Activated CD4-positive, alpha-beta memory T cell treated with anti-CD3 and anti-CD28 coated beads, Interleukin-2, amount 10 ng/mL, durations not matched to agents 7 days and 5 days (primary cell): ENCODE measurements at regions of chr12 and their contacts with region 1.

Region 1: GRCh38 chr12:3727877-3728632 is 24.9 kb downstream of the CRACR2A start:
- DNase-seq: peak; percentile 65
- H3K4me3 Mint-ChIP-seq: peak overlapping the region; percentile 37
- H3K27ac Mint-ChIP-seq: peak overlapping the region; percentile 84
- H3K4me1 Mint-ChIP-seq: peaks cover 39% of the 10 kb centered on the region
- H3K27me3 Mint-ChIP-seq: no peaks in the 10 kb centered on the region

Region 2: DNA sequence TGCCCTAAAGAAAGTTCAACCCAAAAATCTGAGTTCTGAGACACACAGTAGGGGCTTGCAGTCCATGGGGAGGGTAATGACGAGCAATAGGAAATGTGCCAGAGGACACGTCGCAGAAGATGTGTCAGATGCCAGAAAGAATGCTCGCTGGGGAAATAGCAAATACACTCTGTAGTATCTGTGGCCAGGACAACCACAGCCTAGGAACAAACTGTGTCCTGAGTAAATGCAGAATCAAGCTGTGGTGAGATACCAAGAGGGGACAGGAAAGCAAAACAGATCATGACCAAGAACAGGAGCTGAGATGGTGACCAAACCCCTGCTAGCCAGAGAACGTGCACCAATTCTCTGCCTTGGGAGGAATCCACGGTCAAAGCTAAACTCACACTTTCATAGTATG is 15.7 kb after region 1 on chr12:
- CTCF ChIA-PET with region 1: interaction called, 3 read pairs
- POLR2A ChIA-PET with region 1: interaction called, 19 read pairs
- DNase-seq: peak; percentile 66
- H3K4me3 Mint-ChIP-seq: no peak overlapping the region
- H3K27ac Mint-ChIP-seq: peak overlapping the region; percentile 70
- H3K4me1 Mint-ChIP-seq: peaks cover 53% of the 10 kb centered on the region
- H3K27me3 Mint-ChIP-seq: no peaks in the 10 kb centered on the region

Region 3: DNA sequence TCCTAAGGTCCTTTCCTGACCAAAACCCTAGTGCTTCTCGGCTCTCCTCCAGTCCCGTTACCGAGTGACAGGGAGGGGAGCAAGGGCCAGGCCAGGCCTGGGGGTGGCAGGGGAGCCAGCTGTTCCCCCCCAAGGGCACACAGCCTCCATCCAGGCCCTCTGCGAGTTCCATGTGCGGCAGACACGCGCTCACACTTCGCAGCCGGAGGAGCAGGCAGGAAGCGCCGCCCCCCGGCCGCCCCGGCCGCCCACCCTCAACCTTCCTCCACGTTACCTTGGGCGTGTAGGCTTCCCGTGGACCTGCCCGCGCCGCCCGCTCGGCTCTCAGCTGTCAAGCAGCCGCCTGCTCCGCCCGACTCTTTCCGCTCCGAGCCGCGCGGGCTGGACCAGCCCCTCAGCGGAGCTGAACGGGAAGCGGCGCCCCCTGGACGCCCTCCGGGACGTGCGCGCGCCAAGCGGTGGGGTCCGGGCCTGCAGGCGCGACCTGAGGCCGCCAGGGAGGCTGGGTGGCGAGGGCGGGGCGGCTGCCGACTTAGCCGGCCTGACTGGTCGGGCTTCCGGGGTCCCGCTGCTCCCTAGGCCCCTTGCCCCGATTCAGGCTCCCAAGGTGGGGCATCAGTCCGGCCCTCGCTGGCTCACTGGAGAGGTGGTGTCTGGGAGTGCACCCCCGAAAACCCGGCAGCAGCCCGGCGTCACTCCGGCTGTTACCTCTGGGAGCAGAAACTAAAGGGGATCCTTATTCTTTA is 24.9 kb after region 1 on chr12 and contains the start of gene CRACR2A:
- CTCF ChIA-PET with region 1: interaction called, 3 read pairs
- POLR2A ChIA-PET with region 1: interaction called, 14 read pairs
- DNase-seq: peak; percentile 88
- H3K4me3 Mint-ChIP-seq: peak within 1 kb of the TSS; percentile 89
- H3K27ac Mint-ChIP-seq: peak within 1 kb of the TSS; percentile 97
- H3K4me1 Mint-ChIP-seq: peaks cover 57% of the 10 kb centered on the region
- H3K27me3 Mint-ChIP-seq: no peaks in the 10 kb centered on the region
- total RNA-seq, gene CRACR2A: 32.4 to 34.3 TPM

Region 4: GRCh38 chr12:4011597-4011996 is 283.5 kb after region 1 on chr12:
- CTCF ChIA-PET with region 1: no interaction called
- POLR2A ChIA-PET with region 1: no interaction called
- DNase-seq: no peak
- H3K4me3 Mint-ChIP-seq: no peak overlapping the region
- H3K27ac Mint-ChIP-seq: no peak overlapping the region
- H3K4me1 Mint-ChIP-seq: no peaks in the 10 kb centered on the region
- H3K27me3 Mint-ChIP-seq: no peaks in the 10 kb centered on the region